OCI-LY7 (cell line): ENCODE measurements at regions of chr5 and their contacts with region 1.

Region 1: GRCh38 chr5:111512375-111513130 is at the start of gene STARD4:
- DNase-seq: peak; percentile 96
- H3K4me3 ChIP-seq: peak within 1 kb of the TSS; percentile 91
- H3K27ac ChIP-seq: peak within 1 kb of the TSS; percentile 69
- H3K4me1 ChIP-seq: peaks cover 38% of the 10 kb centered on the region
- CTCF ChIP-seq: no peak
- total RNA-seq, gene STARD4: 28.1 and 30.4 TPM in 2 replicates

Region 2: DNA sequence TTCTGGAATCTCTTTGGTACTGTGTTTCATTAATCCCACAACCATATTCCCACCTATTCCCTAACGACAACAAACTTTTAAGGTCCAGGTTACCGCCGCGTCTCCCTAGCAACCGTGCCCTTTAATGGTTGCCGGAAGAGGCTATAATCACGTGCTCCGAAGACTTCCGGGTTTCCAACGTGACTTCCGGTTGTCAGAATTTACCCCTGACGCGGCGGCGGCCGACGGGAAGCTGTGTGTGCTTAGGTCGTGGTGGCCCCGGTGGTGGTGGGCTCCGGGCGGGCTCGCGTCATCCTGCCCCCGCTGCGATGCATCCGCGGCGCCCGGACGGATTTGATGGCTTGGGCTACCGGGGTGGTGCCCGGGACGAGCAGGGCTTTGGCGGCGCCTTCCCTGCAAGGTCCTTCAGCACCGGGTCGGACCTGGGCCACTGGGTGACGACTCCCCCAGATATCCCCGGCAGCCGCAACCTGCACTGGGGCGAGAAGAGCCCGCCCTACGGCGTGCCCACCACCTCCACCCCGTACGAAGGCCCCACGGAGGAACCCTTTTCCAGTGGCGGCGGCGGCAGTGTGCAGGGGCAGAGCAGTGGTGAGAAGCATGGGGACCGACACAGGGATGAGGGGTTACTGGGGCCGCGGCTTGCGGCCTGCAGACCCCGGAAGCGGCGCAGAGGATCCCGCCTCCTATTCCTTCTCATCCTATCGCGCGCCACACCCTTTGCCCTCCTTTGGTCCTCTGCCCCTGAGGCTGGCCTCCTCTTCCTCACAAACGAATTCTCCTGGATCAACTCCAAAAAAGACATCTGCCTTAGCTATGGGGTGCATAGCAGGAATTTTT is 773.5 kb before region 1 on chr5 and contains the start of gene SLC25A46:
- CTCF ChIA-PET with region 1: no interaction called
- POLR2A ChIA-PET with region 1: no interaction called
- intact Hi-C with region 1: loop called (anchors 5 kb)
- DNase-seq: peak; percentile 92
- H3K4me3 ChIP-seq: peak within 1 kb of the TSS; percentile 94
- H3K27ac ChIP-seq: peak within 1 kb of the TSS; percentile 66
- H3K4me1 ChIP-seq: peaks cover 16% of the 10 kb centered on the region
- CTCF ChIP-seq: no peak
- total RNA-seq, gene SLC25A46: 36.4 and 37.8 TPM in 2 replicates

Region 3: GRCh38 chr5:111757355-111758283 is 245.1 kb after region 1 on chr5:
- CTCF ChIA-PET with region 1: no interaction called
- POLR2A ChIA-PET with region 1: interaction called, 4 read pairs
- intact Hi-C with region 1: loop called (anchors 10 kb)
- DNase-seq: peak; percentile 90
- H3K4me3 ChIP-seq: peak overlapping the region; percentile 79
- H3K27ac ChIP-seq: peak overlapping the region; percentile 88
- H3K4me1 ChIP-seq: peaks cover 36% of the 10 kb centered on the region
- CTCF ChIP-seq: peak; percentile 42; the same call in 1 of the 2 replicates